K562 (cell line): ENCODE measurements at regions of chr3 and their contacts with region 1.

Region 1: DNA sequence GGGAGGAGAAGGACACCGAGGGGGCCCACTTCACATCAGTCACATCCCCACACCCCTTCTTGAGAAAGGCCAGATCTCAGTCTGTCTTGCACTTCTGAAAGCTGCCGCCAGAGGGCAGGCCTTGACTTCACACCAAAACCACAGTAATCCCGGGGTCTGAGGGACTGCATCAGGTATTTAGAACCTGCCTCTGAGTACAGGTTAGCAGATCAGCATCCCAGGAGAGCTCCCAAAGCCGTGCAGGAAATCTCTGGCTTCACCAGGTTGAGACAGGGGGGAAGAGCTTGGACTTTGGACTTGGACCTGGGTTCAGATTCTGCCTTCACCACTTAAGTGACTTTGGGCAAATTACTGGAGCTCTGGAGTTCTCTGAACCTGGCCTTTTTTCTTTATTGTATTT is 50.3 kb downstream of the LHFPL4 start:
- DNase-seq: peak; percentile 82 to 90 (median 84)
- ATAC-seq: peak; percentile 77
- H3K4me3 ChIP-seq: no peak overlapping the region
- H3K27ac ChIP-seq: no peak overlapping the region
- H3K4me1 ChIP-seq: peaks cover 0 to 8% of the 10 kb centered on the region in 2 experiments; a peak in 3 of 5 replicates
- H3K27me3 ChIP-seq: peaks cover 20 to 47% of the 10 kb centered on the region in 2 experiments; a peak in 4 of 5 replicates
- CTCF ChIP-seq: peak; percentile 88 to 98 (median 97)
- EP300 ChIP-seq: no peak
- POLR2A ChIP-seq: no peak
- RAD21 ChIP-seq: peak; percentile 92 to 96

Region 2: GRCh38 chr3:9340472-9340902 is 162.8 kb before region 1 on chr3:
- CTCF ChIA-PET with region 1: no interaction called
- POLR2A ChIA-PET with region 1: no interaction called
- in situ Hi-C with region 1: no loop called
- intact Hi-C with region 1: no loop called
- DNase-seq: no peak
- ATAC-seq: peak; percentile 28; the same call in 1 of the 3 replicates
- H3K4me3 ChIP-seq: no peak overlapping the region
- H3K27ac ChIP-seq: no peak overlapping the region
- H3K4me1 ChIP-seq: no peaks in the 10 kb centered on the region
- H3K27me3 ChIP-seq: peaks cover 21 to 28% of the 10 kb centered on the region in 2 experiments
- CTCF ChIP-seq: no peak
- EP300 ChIP-seq: no peak
- POLR2A ChIP-seq: no peak
- RAD21 ChIP-seq: no peak

Region 3: DNA sequence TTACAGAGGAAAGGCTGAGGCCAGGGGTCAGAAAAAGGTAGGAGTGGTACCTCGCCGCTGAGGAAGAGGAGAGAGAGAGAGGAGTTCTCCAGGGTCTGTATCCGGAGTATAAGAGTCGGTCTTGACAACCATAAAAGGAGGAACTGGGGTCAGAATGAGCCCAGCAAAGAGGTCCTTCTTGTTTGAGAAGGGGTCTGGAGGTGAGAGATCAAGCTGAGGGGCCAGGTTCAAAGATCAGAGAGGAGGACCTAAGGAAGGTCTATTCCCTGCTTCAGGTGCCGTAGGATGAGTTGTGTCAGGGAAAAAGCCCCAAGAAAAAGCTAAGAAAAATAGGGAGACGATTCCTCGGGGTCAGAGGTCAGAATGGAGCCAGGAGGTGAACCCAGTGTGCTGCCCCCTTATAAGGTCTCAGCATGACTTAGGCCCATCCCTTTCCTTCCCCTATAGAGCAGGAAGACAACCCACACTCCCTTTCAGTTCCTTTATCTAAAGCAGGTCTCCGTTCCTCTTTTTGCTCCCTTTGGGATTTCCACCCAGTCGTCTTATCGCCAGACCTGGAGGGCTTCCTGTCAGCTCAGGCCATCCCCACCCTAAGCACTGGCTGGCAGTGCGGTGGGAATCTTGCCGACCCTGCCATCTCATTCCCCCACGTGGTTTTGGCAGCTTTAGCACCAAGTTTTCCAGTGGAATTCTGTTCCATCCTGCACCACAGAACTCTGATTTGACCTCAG is 146.7 kb after region 1 on chr3:
- CTCF ChIA-PET with region 1: no interaction called
- POLR2A ChIA-PET with region 1: no interaction called
- in situ Hi-C with region 1: no loop called
- intact Hi-C with region 1: loop called (anchors 5 kb)
- DNase-seq: peak; percentile 34 to 49 (median 38)
- ATAC-seq: no peak
- H3K4me3 ChIP-seq: peak overlapping the region; percentile 95
- H3K27ac ChIP-seq: peak overlapping the region; percentile 72
- H3K4me1 ChIP-seq: peaks cover 13 to 23% of the 10 kb centered on the region in 2 experiments; a peak in 4 of 5 replicates
- H3K27me3 ChIP-seq: no peaks in the 10 kb centered on the region
- CTCF ChIP-seq: no peak
- EP300 ChIP-seq: no peak
- POLR2A ChIP-seq: no peak
- RAD21 ChIP-seq: no peak

Region 4: GRCh38 chr3:9715764-9716437 is 212.6 kb after region 1 on chr3:
- CTCF ChIA-PET with region 1: interaction called, 3 read pairs
- POLR2A ChIA-PET with region 1: no interaction called
- in situ Hi-C with region 1: loop called (anchors 10 kb)
- intact Hi-C with region 1: loop called (anchors 5 kb)
- DNase-seq: peak; percentile 82 to 94 (median 87)
- ATAC-seq: peak; percentile 99
- H3K4me3 ChIP-seq: no peak overlapping the region
- H3K27ac ChIP-seq: peak overlapping the region; percentile 62; the same call in 2 of the 3 replicates
- H3K4me1 ChIP-seq: peaks cover 5 to 10% of the 10 kb centered on the region in 2 experiments; a peak in 4 of 5 replicates
- H3K27me3 ChIP-seq: peaks cover 33 to 38% of the 10 kb centered on the region in 2 experiments
- CTCF ChIP-seq: peak; percentile 93 to 99 (median 99)
- EP300 ChIP-seq: peak; percentile 79
- POLR2A ChIP-seq: no peak
- RAD21 ChIP-seq: peak; percentile 99

Region 5: GRCh38 chr3:9731206-9732079 is 228.2 kb after region 1 on chr3 and contains the start of gene BRPF1:
- CTCF ChIA-PET with region 1: no interaction called
- POLR2A ChIA-PET with region 1: interaction called, 3 read pairs
- in situ Hi-C with region 1: loop called (anchors 10 kb)
- intact Hi-C with region 1: loop called (anchors 1 kb)
- DNase-seq: peak; percentile 99 to 100 (median 100)
- ATAC-seq: peak; percentile 97
- H3K4me3 ChIP-seq: peak within 1 kb of the TSS; percentile 93
- H3K27ac ChIP-seq: peak within 1 kb of the TSS; percentile 100
- H3K4me1 ChIP-seq: peaks cover 34 to 36% of the 10 kb centered on the region in 2 experiments
- H3K27me3 ChIP-seq: no peaks in the 10 kb centered on the region
- CTCF ChIP-seq: peak in 1 of 3 experiments; percentile 3; a peak in 1 of 6 replicates
- EP300 ChIP-seq: peak; percentile 99
- POLR2A ChIP-seq: peak; percentile 87
- RAD21 ChIP-seq: 0 out of 4 replicates have a peak, but pooled peaks of 1 of the 2 experiments have one; percentile 11
- polyA plus RNA-seq, gene BRPF1: 1.1 to 1.4 TPM